ENCODE measurements at regions of chr19 and their contacts with region 1.

Region 1: GRCh38 chr19:6516659-6517291 is 14.1 kb upstream of the TNFSF9 start:
- DNase-seq: peak; percentile 94
- H3K4me3 Mint-ChIP-seq: peak overlapping the region; percentile 88
- H3K27ac Mint-ChIP-seq: peak overlapping the region; percentile 75
- H3K4me1 Mint-ChIP-seq: peaks cover 36% of the 10 kb centered on the region
- H3K27me3 Mint-ChIP-seq: peaks cover 2% of the 10 kb centered on the region

Region 2: DNA sequence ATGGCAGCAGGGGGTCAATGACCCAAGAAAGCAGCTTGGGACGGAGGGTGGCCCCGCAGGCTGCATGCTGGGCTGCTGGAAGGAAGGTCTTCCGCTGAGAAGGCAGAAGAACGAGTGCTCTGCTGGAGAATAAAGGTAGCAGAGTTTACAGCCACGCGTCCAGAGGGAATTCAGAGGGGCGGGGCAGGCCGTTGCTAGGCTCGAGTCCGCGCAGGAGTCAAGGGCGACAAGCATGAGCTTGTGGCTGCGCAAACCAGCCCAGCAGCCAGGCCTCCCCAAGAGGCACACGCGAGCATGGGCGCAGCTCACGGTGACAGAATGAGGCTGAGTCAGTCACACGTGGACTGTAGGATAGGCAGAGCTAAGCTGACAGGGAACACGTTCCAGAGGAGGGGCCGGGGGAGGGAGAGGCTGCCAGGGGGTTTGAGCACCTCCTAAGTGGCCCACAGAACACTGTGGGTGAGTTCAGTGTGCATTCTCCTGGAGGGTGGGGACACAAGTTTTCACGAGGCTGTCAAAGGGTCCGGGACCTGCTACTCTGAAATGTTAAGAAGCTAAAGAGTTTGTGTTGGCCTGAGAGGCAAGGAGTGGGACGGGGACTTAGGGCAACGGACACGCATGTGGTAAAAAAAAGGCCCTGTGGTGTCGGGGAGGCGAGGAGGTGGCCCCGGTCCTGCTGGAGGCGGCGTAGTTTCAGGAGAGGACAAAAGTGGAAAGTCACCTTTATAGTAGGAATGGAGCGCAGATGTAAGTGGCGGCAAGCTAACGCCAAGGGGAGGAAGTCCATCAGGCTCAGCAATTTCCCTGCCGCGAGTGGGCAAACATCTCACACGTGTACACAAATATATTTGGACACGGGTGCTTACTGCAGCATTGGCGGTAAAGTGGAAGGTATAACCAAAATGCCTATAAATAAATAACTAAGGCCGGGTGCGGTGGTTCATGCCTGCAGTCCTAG is 424.2 kb before region 1 on chr19:
- CTCF ChIA-PET with region 1: no interaction called
- POLR2A ChIA-PET with region 1: no interaction called
- intact Hi-C with region 1: no loop called
- DNase-seq: no peak
- H3K4me3 Mint-ChIP-seq: no peak overlapping the region
- H3K27ac Mint-ChIP-seq: no peak overlapping the region
- H3K4me1 Mint-ChIP-seq: peaks cover 7% of the 10 kb centered on the region
- H3K27me3 Mint-ChIP-seq: peaks cover 3% of the 10 kb centered on the region

Region 3: GRCh38 chr19:6460101-6460853 is 56.5 kb before region 1 on chr19:
- CTCF ChIA-PET with region 1: no interaction called
- POLR2A ChIA-PET with region 1: no interaction called
- intact Hi-C with region 1: loop called (anchors 5 kb)
- DNase-seq: peak; percentile 98
- H3K4me3 Mint-ChIP-seq: peak overlapping the region; percentile 91
- H3K27ac Mint-ChIP-seq: peak overlapping the region; percentile 88
- H3K4me1 Mint-ChIP-seq: peaks cover 21% of the 10 kb centered on the region
- H3K27me3 Mint-ChIP-seq: no peaks in the 10 kb centered on the region

Region 4: DNA sequence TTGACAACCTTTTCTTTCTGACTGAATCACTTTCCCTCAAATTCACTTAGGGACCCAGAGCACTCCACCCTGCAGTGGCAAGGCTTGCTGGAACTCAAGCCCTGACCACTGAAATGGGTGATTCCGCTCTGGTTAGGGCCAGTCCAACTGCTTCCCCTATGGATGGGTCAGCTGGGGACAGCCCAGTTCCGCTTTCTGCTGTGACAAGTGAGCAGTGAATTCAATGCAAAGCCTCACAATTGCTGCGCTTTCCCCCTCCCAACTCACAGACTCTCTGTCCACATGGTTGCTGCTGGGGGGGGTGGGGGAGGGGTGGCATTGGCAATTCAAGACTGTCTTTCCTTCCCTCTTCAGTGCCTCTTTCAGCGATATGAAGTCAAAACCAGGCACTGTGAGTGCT is 55.4 kb after region 1 on chr19:
- CTCF ChIA-PET with region 1: no interaction called
- POLR2A ChIA-PET with region 1: no interaction called
- intact Hi-C with region 1: no loop called
- DNase-seq: no peak
- H3K4me3 Mint-ChIP-seq: no peak overlapping the region
- H3K27ac Mint-ChIP-seq: no peak overlapping the region
- H3K4me1 Mint-ChIP-seq: no peaks in the 10 kb centered on the region
- H3K27me3 Mint-ChIP-seq: peaks cover 11% of the 10 kb centered on the region

Region 5: DNA sequence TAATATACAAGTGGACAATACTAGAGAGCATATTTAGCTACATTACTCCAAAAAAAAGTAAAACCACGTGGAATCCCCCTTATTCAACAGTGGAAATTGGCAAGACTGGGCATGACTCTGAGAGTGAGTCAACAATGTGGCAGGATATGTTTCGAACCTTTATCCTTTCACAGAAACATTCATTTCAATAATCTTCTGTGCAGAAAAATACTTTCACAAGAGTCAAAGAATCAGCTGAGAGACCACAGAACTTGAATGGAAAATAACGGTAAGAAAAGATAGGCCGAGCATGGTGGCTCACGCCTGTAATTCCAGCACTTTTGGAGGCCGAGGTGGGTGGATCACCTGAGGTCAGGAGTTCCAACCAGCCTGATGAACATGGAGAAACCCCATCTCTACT is 99.2 kb after region 1 on chr19:
- CTCF ChIA-PET with region 1: interaction called, 4 read pairs
- POLR2A ChIA-PET with region 1: interaction called, 3 read pairs
- intact Hi-C with region 1: loop called (anchors 5 kb)
- DNase-seq: peak; percentile 64
- H3K4me3 Mint-ChIP-seq: no peak overlapping the region
- H3K27ac Mint-ChIP-seq: peak overlapping the region; percentile 59
- H3K4me1 Mint-ChIP-seq: peaks cover 32% of the 10 kb centered on the region
- H3K27me3 Mint-ChIP-seq: peaks cover 28% of the 10 kb centered on the region

Region 6: GRCh38 chr19:6654347-6655310 is 137.9 kb after region 1 on chr19:
- CTCF ChIA-PET with region 1: interaction called, 11 read pairs
- POLR2A ChIA-PET with region 1: interaction called, 6 read pairs
- intact Hi-C with region 1: no loop called
- DNase-seq: peak; percentile 85
- H3K4me3 Mint-ChIP-seq: peak overlapping the region; percentile 61
- H3K27ac Mint-ChIP-seq: peak overlapping the region; percentile 95
- H3K4me1 Mint-ChIP-seq: peaks cover 59% of the 10 kb centered on the region
- H3K27me3 Mint-ChIP-seq: no peaks in the 10 kb centered on the region

Region 7: DNA sequence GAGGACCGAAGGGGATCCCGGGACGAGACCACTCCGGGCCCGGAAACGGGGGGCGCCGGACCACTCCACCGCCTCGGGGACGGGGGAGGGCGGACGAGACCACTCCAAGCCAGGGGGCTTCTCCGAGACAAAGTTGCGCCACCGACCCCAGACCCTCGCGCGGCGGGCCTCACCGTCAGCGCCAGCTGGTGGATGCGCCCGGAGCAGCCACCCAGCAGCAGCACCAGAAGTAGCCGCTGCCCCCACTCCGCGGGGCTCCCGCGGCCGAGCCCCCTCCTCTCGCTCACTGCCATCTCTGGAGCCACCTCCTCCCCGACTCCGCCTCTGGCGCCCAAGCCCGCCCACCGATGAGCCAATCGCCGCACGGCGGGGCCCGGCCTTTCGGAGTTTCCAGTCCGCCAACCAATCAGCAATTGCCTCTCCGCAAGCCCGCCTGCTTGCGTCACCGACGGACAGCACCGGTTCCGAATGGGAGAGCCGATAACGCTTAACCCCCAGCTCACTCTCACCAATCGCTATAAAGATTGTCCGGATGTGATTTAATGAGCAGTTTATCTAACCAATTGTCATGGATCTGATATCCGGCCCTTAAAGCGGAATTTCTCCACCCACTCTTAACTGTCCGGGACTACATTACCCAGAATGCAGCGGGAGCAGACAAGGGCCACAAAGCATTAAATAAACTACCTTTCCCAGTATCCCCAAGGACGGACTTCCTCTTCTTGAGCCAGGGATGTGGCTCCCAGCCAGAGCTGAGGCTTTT is 220.7 kb after region 1 on chr19 and contains the start of gene GPR108:
- CTCF ChIA-PET with region 1: interaction called, 20 read pairs
- POLR2A ChIA-PET with region 1: interaction called, 3 read pairs
- intact Hi-C with region 1: loop called (anchors 1 kb)
- DNase-seq: peak; percentile 100
- H3K4me3 Mint-ChIP-seq: peak within 1 kb of the TSS; percentile 98
- H3K27ac Mint-ChIP-seq: peak within 1 kb of the TSS; percentile 98
- H3K4me1 Mint-ChIP-seq: peaks cover 34% of the 10 kb centered on the region
- H3K27me3 Mint-ChIP-seq: no peaks in the 10 kb centered on the region
- total RNA-seq, gene GPR108: 72.1 to 75.4 TPM

Region 8: DNA sequence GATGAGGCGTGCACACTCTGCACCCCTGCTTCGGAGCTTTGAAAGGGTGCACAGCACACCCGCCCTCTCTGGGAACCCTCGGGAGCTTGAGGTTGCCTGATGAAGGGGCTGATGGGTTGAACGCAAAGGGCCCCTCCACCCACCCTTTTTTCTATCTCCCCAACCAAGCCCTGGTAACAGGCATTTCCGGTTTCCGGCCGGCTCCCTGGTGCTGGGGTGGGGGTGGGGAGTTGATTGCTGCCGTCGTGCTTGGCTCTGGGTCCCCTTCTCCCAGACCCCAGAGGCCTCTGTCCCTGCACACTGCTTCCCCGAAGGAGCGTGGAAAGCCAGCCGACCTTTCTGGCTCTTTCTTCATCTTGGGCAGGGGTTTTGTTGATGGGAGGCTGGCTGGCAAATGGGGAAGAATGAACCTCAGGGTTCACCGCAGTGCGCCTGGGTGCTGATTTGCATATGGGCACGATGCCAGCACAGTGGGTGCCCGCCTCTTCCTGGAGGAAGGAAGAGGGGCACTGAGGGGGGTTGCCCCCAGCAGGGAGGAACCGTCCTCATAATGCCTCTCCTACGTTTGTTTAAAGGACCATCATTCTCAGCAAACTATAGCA is 284.8 kb after region 1 on chr19:
- CTCF ChIA-PET with region 1: interaction called, 3 read pairs
- POLR2A ChIA-PET with region 1: no interaction called
- intact Hi-C with region 1: loop called (anchors 5 kb)
- DNase-seq: peak; percentile 89
- H3K4me3 Mint-ChIP-seq: peak overlapping the region; percentile 75
- H3K27ac Mint-ChIP-seq: peak overlapping the region; percentile 94
- H3K4me1 Mint-ChIP-seq: peaks cover 53% of the 10 kb centered on the region
- H3K27me3 Mint-ChIP-seq: no peaks in the 10 kb centered on the region

Measured in activated CD4-positive, alpha-beta memory T cell treated with anti-CD3 and anti-CD28 coated beads for 36 hours (primary cell).